ENCODE measurements at regions of chr12 and their contacts with region 1.

Region 1: GRCh38 chr12:71360013-71360412 is 79.6 kb upstream of the LGR5 start:
- DNase-seq: no peak
- H3K4me3 ChIP-seq: no peak overlapping the region
- H3K27ac ChIP-seq: no peak overlapping the region
- H3K4me1 ChIP-seq: no peaks in the 10 kb centered on the region
- H3K27me3 ChIP-seq: no peaks in the 10 kb centered on the region
- CTCF ChIP-seq: no peak
- POLR2A ChIP-seq: no peak

Region 2: DNA sequence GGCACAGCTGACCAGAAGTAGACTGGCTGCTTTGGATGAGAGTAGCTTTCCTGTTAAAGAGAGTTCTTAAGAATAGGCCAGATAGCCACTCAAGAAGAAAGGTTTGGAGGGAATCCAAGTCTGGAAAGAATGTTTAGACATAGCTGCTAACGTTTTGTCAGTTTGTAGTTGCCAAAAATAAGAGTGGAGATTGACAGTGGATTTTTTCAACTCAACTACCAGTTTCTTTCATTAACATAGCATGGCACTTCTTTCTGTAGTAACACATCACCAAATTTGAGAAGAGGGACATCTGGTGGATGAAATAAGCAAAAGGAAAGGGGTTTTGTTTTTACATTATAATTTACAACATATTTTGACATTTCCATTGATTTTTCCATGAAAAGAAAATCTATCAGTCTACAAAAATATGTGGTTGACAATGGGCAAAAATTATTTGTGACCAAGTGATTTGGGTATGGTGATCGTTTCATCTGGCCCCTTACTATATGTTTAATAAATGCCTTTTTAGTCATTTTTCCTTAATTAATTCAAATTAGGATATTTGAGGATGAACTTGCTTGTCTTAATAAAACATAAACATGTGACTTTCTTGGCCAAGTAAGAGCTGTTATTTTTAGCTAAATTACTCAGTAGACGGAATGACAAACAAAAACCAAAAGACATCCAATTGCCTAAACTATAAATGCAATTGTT is 510.6 kb before region 1 on chr12:
- CTCF ChIA-PET with region 1: no interaction called
- POLR2A ChIA-PET with region 1: no interaction called
- dilution Hi-C with region 1: no loop called
- intact Hi-C with region 1: no loop called
- DNase-seq: peak; percentile 39
- H3K4me3 ChIP-seq: no peak overlapping the region
- H3K27ac ChIP-seq: no peak overlapping the region
- H3K4me1 ChIP-seq: no peaks in the 10 kb centered on the region
- H3K27me3 ChIP-seq: peaks cover 3 to 5% of the 10 kb centered on the region in 2 experiments
- CTCF ChIP-seq: peak in 1 of 2 donors; percentile 20
- POLR2A ChIP-seq: no peak

Region 3: DNA sequence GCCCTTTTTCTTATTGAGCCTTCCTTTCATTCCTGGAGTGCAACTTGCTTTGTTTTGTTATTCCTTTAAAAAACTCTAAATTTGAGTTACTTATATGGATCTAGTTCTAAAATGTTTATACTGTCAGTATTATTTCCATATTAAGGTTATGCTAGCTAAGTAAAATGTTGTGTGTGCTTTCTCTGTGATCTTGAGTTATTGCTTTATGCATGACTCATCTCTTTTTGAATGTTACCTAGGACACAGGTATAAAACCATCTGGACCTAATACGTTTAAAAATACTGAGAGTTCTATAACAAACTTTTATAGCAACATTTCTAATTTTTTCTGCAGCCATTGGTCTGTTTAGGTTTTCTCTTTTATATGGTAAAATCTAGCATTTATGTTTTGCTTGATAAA is 53.2 kb before region 1 on chr12:
- CTCF ChIA-PET with region 1: no interaction called
- POLR2A ChIA-PET with region 1: no interaction called
- dilution Hi-C with region 1: no loop called
- intact Hi-C with region 1: loop called (anchors 2 kb)
- DNase-seq: no peak
- H3K4me3 ChIP-seq: no peak overlapping the region
- H3K27ac ChIP-seq: no peak overlapping the region
- H3K4me1 ChIP-seq: no peaks in the 10 kb centered on the region
- H3K27me3 ChIP-seq: no peaks in the 10 kb centered on the region
- CTCF ChIP-seq: no peak
- POLR2A ChIP-seq: no peak

Measured in endothelial cell of umbilical vein (primary cell).